Ovary (tissue), 10 donors: ENCODE measurements at regions of chr10 and their contacts with region 1.

Region 1: GRCh38 chr10:12445701-12446334 is 96.5 kb downstream of the CAMK1D start:
- DNase-seq: peak in 1 of 5 donors; percentile 36
- H3K4me3 ChIP-seq: no peak overlapping the region
- H3K27ac ChIP-seq: peak overlapping the region in 1 of 2 donors; percentile 49
- H3K4me1 ChIP-seq: peaks cover 16% of the 10 kb centered on the region
- H3K27me3 ChIP-seq: no peaks in the 10 kb centered on the region
- CTCF ChIP-seq: no peak
- EP300 ChIP-seq: no peak
- POLR2A ChIP-seq: no peak

Region 2: GRCh38 chr10:12412666-12413368 is 33.0 kb before region 1 on chr10:
- intact Hi-C with region 1: loop called in 1 of 4 experiments (anchors 2 kb)
- DNase-seq: no peak
- H3K4me3 ChIP-seq: no peak overlapping the region
- H3K27ac ChIP-seq: no peak overlapping the region
- H3K4me1 ChIP-seq: peaks cover 2% of the 10 kb centered on the region
- H3K27me3 ChIP-seq: no peaks in the 10 kb centered on the region
- CTCF ChIP-seq: no peak
- EP300 ChIP-seq: no peak
- POLR2A ChIP-seq: no peak

Region 3: GRCh38 chr10:13115832-13116803 is 670.3 kb after region 1 on chr10:
- intact Hi-C with region 1: no loop called
- DNase-seq: no peak
- H3K4me3 ChIP-seq: no peak overlapping the region
- H3K27ac ChIP-seq: peak overlapping the region in 1 of 2 donors; percentile 12
- H3K4me1 ChIP-seq: peaks cover 4% of the 10 kb centered on the region
- H3K27me3 ChIP-seq: no peaks in the 10 kb centered on the region
- CTCF ChIP-seq: no peak
- EP300 ChIP-seq: no peak
- POLR2A ChIP-seq: no peak